ENCODE measurements at regions of chr17 and their contacts with region 1.

Region 1: DNA sequence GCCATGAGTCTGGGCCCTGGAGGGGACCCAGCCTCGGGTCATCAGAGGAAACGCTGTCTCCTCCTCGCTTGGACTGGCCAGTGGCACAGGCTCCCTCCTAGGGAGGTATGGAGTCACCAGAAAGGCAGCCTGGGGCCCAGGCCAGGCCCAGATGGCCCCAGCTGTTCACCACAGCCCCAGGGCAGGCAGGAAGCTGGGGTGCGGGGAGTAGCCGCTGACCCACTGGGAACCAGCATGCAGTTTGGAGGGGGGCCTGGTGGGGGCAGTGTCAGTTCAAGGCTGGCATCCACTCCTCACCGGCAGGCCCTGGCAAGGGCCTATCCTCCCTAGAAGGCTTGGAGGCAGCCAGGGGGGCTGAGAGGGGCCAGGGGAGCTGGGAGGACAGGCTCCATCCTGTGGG is 48.8 kb downstream of the SDK2 start:
- DNase-seq: peak; percentile 55
- H3K4me3 ChIP-seq: no peak overlapping the region
- H3K27ac ChIP-seq: peak overlapping the region; percentile 96
- H3K4me1 ChIP-seq: peaks cover 67% of the 10 kb centered on the region
- CTCF ChIP-seq: peak; percentile 71

Region 2: GRCh38 chr17:73192894-73193701 is 402.4 kb before region 1 on chr17 and contains the start of gene COG1:
- CTCF ChIA-PET with region 1: no interaction called
- POLR2A ChIA-PET with region 1: no interaction called
- intact Hi-C with region 1: loop called (anchors 2 kb)
- DNase-seq: peak; percentile 97
- H3K4me3 ChIP-seq: peak within 1 kb of the TSS; percentile 78
- H3K27ac ChIP-seq: peak within 1 kb of the TSS; percentile 83
- H3K4me1 ChIP-seq: peaks cover 17% of the 10 kb centered on the region
- CTCF ChIP-seq: no peak
- total RNA-seq, gene COG1: 19.8 and 38.3 TPM in 2 replicates

Region 3: GRCh38 chr17:73580073-73580710 is 15.3 kb before region 1 on chr17:
- CTCF ChIA-PET with region 1: no interaction called
- POLR2A ChIA-PET with region 1: interaction called, 18 read pairs
- intact Hi-C with region 1: no loop called
- DNase-seq: no peak
- H3K4me3 ChIP-seq: no peak overlapping the region
- H3K27ac ChIP-seq: no peak overlapping the region
- H3K4me1 ChIP-seq: peaks cover 22% of the 10 kb centered on the region
- CTCF ChIP-seq: no peak

Region 4: GRCh38 chr17:73697872-73698271 is 102.4 kb after region 1 on chr17:
- CTCF ChIA-PET with region 1: no interaction called
- POLR2A ChIA-PET with region 1: no interaction called
- intact Hi-C with region 1: no loop called
- DNase-seq: no peak
- H3K4me3 ChIP-seq: no peak overlapping the region
- H3K27ac ChIP-seq: no peak overlapping the region
- H3K4me1 ChIP-seq: no peaks in the 10 kb centered on the region
- CTCF ChIP-seq: no peak

Region 5: GRCh38 chr17:73956669-73957465 is 361.4 kb after region 1 on chr17:
- CTCF ChIA-PET with region 1: no interaction called
- POLR2A ChIA-PET with region 1: no interaction called
- intact Hi-C with region 1: loop called (anchors 5 kb)
- DNase-seq: peak; percentile 68
- H3K4me3 ChIP-seq: no peak overlapping the region
- H3K27ac ChIP-seq: no peak overlapping the region
- H3K4me1 ChIP-seq: no peaks in the 10 kb centered on the region
- CTCF ChIP-seq: peak; percentile 90

Measured in OCI-LY7 (cell line).